PC-3 (cell line): ENCODE measurements at regions of chr2 and their contacts with region 1.

Region 1: DNA sequence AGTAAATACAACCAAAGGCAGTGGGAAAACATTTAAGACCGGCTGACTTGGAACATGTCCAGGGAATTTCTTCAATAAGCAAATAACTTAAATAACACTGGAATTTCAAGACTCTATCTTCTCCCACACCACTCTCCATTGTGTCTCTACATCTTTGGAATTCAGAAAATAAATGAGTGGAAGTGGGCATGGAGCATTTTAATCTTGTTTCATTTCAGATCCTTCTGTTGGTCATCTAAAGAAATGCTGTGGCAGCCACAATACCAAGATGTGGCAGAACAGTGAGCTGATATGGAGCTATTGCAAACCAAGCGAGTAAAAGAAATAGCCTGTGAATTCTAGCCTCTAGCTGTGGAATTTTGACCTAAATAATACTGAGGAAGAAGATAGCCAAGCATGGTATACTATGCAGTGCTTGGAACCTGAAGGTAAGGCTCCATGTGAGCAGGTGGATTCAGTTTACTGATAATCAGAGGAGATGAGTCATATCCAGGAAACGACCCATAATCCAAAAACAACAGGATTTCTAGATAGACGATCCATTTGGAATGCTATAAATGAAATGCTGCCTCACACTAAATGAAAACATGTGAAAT is 157.1 kb upstream of the SCN7A start:
- DNase-seq: peak; percentile 75
- ATAC-seq: peak; percentile 76
- H3K4me3 ChIP-seq: no peak overlapping the region
- H3K27ac ChIP-seq: 0 out of 2 replicates have a peak overlapping the region, but pooled peaks have one; percentile 6
- H3K4me1 ChIP-seq: peaks cover 33% of the 10 kb centered on the region
- H3K27me3 ChIP-seq: no peaks in the 10 kb centered on the region
- CTCF ChIP-seq: no peak

Region 2: DNA sequence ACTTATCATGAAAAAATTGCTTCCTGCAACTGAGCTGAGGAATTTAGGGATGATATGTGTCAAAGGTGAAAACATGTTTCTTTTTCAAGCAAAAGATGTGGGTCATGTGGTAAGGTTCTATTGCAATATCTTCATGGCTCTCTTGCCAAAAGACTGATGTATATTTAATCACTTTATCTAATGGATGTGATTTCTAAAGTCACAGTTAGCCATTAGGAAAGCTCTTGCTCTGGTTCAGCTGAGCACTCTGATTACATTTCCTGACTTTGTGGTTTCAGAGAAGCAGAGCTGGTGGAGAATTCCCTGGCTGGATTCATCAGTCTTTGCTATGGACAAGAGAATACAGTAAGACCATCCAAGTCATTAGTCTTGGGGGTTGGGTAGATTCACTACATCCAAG is 299.9 kb before region 1 on chr2:
- CTCF ChIA-PET with region 1: no interaction called
- POLR2A ChIA-PET with region 1: no interaction called
- intact Hi-C with region 1: no loop called
- DNase-seq: no peak
- ATAC-seq: no peak
- H3K4me3 ChIP-seq: no peak overlapping the region
- H3K27ac ChIP-seq: no peak overlapping the region
- H3K4me1 ChIP-seq: peaks cover 11% of the 10 kb centered on the region
- H3K27me3 ChIP-seq: no peaks in the 10 kb centered on the region
- CTCF ChIP-seq: no peak

Region 3: DNA sequence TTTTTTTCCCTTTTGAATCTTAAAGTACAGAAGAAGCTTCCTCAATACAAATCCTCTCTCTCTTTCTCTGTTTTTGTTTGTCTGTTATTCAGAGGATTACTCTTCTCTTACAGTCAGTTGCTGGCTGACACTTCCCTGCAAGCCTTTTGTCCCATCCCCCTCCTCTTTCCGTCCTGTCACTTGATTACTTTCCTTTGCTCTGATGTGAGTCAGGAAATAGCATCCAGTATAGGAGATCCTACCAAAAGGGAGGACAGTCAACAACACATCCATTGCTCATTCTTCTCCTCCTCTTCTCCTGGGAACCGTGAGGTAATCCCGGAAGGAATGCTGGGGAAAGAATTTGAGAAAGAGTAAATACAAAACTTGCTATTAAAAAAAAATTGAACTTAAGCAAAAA is 77.8 kb before region 1 on chr2:
- CTCF ChIA-PET with region 1: no interaction called
- POLR2A ChIA-PET with region 1: no interaction called
- intact Hi-C with region 1: loop called (anchors 5 kb)
- DNase-seq: peak; percentile 87
- ATAC-seq: peak; percentile 98
- H3K4me3 ChIP-seq: no peak overlapping the region
- H3K27ac ChIP-seq: peak overlapping the region; percentile 43
- H3K4me1 ChIP-seq: peaks cover 24% of the 10 kb centered on the region
- H3K27me3 ChIP-seq: no peaks in the 10 kb centered on the region
- CTCF ChIP-seq: no peak

Region 4: GRCh38 chr2:166665991-166666940 is 15.1 kb after region 1 on chr2:
- CTCF ChIA-PET with region 1: no interaction called
- POLR2A ChIA-PET with region 1: no interaction called
- intact Hi-C with region 1: no loop called
- DNase-seq: peak; percentile 44
- ATAC-seq: peak; percentile 10; the same call in 1 of the 2 replicates
- H3K4me3 ChIP-seq: no peak overlapping the region
- H3K27ac ChIP-seq: no peak overlapping the region
- H3K4me1 ChIP-seq: peaks cover 5% of the 10 kb centered on the region
- H3K27me3 ChIP-seq: no peaks in the 10 kb centered on the region
- CTCF ChIP-seq: no peak